GM12878 (cell line): ENCODE measurements at regions of chr3 and their contacts with region 1.

Region 1: DNA sequence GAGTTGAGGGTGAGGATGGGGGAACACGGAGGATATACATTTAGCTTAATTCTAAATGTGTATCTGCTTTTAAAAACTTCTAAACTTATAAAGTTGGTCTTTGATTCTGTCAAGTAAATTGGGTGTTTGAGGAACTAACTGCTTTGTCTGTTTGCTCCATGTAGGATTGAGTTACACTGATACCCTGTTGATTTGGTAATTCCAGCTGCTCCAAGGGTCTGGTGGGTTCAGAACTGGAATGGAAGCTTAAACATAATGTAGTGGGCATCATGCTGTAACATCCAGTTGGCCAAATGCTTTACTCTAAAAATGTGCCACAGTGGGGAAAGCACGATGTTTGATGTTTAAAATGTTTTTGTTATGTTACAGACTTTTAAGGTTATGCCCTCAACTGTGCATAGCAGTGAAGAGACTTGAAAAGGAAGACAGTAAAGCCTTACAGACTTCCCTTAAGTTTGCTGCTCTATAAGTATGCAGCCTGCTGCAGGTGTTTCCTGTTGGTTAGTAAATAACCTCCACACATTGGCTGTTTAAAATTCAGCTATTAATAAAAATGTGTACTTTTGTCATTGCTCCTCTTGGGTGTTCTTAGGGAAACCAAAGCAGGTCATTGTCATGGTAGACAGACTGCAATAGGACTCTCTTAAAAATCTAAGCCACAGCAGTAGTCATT is 5.9 kb upstream of the EDEM1 start:
- DNase-seq: no peak
- ATAC-seq: peak; percentile 23
- H3K4me3 ChIP-seq: peak overlapping the region; percentile 34; the same call in 1 of the 2 replicates
- H3K27ac ChIP-seq: peak overlapping the region; percentile 78
- H3K4me1 ChIP-seq: peaks cover 42% of the 10 kb centered on the region
- H3K27me3 ChIP-seq: no peaks in the 10 kb centered on the region
- CTCF ChIP-seq: no peak
- EP300 ChIP-seq: no peak
- POLR2A ChIP-seq: no peak
- RAD21 ChIP-seq: 0 out of 2 replicates have a peak, but pooled peaks have one; percentile 6

Region 2: GRCh38 chr3:4994823-4995499 is 186.6 kb before region 1 on chr3:
- CTCF ChIA-PET with region 1: no interaction called
- POLR2A ChIA-PET with region 1: no interaction called
- RAD21 ChIA-PET with region 1: no interaction called
- SMC1A ChIA-PET with region 1: no interaction called
- in situ Hi-C with region 1: no loop called
- intact Hi-C with region 1: no loop called
- DNase-seq: no peak
- ATAC-seq: peak; percentile 75
- H3K4me3 ChIP-seq: no peak overlapping the region
- H3K27ac ChIP-seq: peak overlapping the region; percentile 7; the same call in 1 of the 2 replicates
- H3K4me1 ChIP-seq: peaks cover 10% of the 10 kb centered on the region
- H3K27me3 ChIP-seq: no peaks in the 10 kb centered on the region
- CTCF ChIP-seq: no peak
- EP300 ChIP-seq: no peak
- POLR2A ChIP-seq: 0 out of 2 replicates have a peak, but pooled peaks have one; percentile 31
- RAD21 ChIP-seq: no peak

Region 3: GRCh38 chr3:5122030-5122740 is 59.4 kb before region 1 on chr3 and contains the start of gene ARL8B:
- CTCF ChIA-PET with region 1: interaction called, 5 read pairs
- POLR2A ChIA-PET with region 1: interaction called, 3 read pairs
- RAD21 ChIA-PET with region 1: interaction called, 31 read pairs
- SMC1A ChIA-PET with region 1: interaction called, 22 read pairs
- in situ Hi-C with region 1: no loop called
- intact Hi-C with region 1: no loop called
- DNase-seq: no peak
- ATAC-seq: peak; percentile 97
- H3K4me3 ChIP-seq: peak within 1 kb of the TSS; percentile 76
- H3K27ac ChIP-seq: peak within 1 kb of the TSS; percentile 78
- H3K4me1 ChIP-seq: no peaks in the 10 kb centered on the region
- H3K27me3 ChIP-seq: no peaks in the 10 kb centered on the region
- CTCF ChIP-seq: peak; percentile 88 to 99 (median 97); a peak in 5 of 6 replicates
- EP300 ChIP-seq: peak; percentile 36 to 66; a peak in 2 of 4 replicates
- POLR2A ChIP-seq: peak; percentile 98
- RAD21 ChIP-seq: peak; percentile 51; the same call in 1 of the 2 replicates
- polyA plus RNA-seq, gene ARL8B: 36.5 to 38.5 TPM

Region 4: DNA sequence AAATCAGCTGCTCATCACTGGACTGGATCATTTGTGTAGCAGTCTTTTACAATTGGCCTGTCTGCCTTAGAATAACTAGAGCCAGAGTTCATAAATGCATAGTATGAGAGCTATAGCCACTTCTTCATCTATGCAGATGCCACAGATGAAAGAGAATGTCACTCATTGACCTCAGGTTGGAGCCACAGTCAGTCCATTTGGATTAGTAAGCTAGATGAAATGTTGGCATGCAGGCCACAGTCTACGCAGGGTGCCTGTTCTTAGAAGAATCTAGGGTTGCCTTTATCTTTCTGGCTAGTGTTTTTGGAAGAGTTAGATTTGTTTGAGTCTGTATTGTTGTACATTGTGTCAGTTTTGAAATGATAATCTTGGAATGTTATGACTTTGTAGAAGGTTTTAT is 19.5 kb before region 1 on chr3:
- CTCF ChIA-PET with region 1: interaction called, 9 read pairs
- POLR2A ChIA-PET with region 1: interaction called, 36 read pairs
- RAD21 ChIA-PET with region 1: interaction called, 8 read pairs
- SMC1A ChIA-PET with region 1: interaction called, 30 read pairs
- in situ Hi-C with region 1: no loop called
- intact Hi-C with region 1: no loop called
- DNase-seq: no peak
- ATAC-seq: peak; percentile 19
- H3K4me3 ChIP-seq: no peak overlapping the region
- H3K27ac ChIP-seq: no peak overlapping the region
- H3K4me1 ChIP-seq: peaks cover 17% of the 10 kb centered on the region
- H3K27me3 ChIP-seq: no peaks in the 10 kb centered on the region
- CTCF ChIP-seq: no peak
- EP300 ChIP-seq: no peak
- POLR2A ChIP-seq: no peak
- RAD21 ChIP-seq: no peak

Region 5: DNA sequence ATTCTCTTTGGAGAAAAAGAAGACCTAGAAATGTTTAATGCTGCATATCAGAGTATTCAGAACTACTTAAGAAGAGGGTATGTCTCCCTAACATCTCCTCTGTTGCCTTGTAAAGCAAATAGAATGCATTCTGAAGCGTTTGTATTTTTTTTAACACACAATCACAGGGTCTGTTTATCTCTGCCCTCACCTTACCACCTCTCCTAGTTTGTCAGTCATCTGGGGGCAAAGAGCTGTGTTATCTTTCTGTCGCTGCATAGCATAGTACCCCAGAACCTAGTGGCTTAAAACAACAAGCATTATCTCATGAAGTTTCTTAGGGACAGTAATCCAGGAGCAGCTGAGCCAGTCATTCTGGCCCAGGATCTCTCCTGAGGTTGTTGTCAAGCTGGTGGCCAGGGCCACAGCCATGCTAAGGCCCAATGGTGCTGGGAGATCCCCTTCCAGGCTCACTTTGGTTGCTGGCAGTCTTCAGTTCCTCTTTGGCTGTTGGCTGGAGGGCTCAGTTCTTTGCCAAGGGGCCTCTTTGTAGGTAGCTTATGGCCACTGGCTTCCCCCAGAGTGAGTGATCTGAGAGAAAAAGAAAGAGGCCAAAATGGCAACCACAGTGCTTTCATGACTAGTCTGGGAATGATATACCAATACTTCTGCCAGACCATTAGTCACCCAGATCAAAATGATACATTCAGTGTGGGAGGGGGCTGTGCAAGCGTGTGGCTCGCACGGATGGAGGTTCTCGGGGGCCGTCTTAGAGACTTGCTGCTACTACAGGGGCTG is 23.7 kb after region 1 on chr3:
- CTCF ChIA-PET with region 1: interaction called, 4 read pairs
- POLR2A ChIA-PET with region 1: interaction called, 6 read pairs
- RAD21 ChIA-PET with region 1: interaction called, 11 read pairs
- SMC1A ChIA-PET with region 1: interaction called, 15 read pairs
- in situ Hi-C with region 1: no loop called
- intact Hi-C with region 1: no loop called
- DNase-seq: peak; percentile 86
- ATAC-seq: peak; percentile 98
- H3K4me3 ChIP-seq: no peak overlapping the region
- H3K27ac ChIP-seq: peak overlapping the region; percentile 38
- H3K4me1 ChIP-seq: peaks cover 9% of the 10 kb centered on the region
- H3K27me3 ChIP-seq: no peaks in the 10 kb centered on the region
- CTCF ChIP-seq: no peak
- EP300 ChIP-seq: peak; percentile 62 to 88; a peak in 3 of 4 replicates
- POLR2A ChIP-seq: 0 out of 2 replicates have a peak, but pooled peaks have one; percentile 40
- RAD21 ChIP-seq: peak; percentile 29; the same call in 1 of the 2 replicates